CD4-positive, alpha-beta memory T cell (primary cell): ENCODE measurements at regions of chr16 and their contacts with region 1.

Region 1: DNA sequence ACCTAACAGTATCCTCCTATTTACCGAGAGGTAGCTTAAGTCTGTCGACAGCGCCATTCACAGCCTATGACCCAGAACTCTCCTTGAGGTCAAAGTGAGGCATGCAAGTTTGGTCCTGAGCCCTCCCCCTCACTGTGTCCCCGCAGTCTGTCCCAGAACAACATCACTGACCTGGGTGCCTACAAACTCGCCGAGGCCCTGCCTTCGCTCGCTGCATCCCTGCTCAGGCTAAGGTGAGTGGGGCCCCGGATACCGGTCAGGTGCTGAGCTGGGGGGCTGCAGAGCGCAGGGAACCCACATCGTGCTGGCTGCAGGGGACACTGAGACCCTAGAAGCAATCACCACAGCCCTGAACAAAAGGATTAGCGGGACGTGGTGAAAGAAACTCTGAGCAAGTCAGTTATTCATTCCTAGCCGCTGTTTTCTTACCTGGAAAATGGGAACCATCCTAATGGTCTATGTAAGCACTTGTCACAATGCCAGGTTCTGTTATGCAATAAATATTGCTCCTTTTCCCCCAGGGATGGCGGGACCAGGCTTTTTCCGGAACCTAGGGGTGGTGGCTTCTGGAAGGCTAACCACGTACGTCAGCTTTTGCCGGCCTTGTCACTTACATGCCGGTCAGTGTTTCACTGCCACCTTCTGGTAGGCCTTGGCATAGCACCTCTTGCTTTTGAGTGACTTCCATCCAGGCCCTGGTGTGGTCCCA is 23.8 kb downstream of the DEXI start:
- DNase-seq: peak; percentile 53 to 73 (median 59)
- H3K4me3 ChIP-seq: no peak overlapping the region
- H3K4me3 Mint-ChIP-seq: peak overlapping the region in 2 of 8 donors; percentile 40 to 43
- H3K27ac ChIP-seq: no peak overlapping the region
- H3K27ac Mint-ChIP-seq: peak overlapping the region in 1 of 7 donors; percentile 11
- H3K4me1 ChIP-seq: no peaks in the 10 kb centered on the region
- H3K4me1 Mint-ChIP-seq: peaks cover 0 to 6% (median 4%) of the 10 kb centered on the region in 4 donors
- H3K27me3 ChIP-seq: no peaks in the 10 kb centered on the region
- H3K27me3 Mint-ChIP-seq: peaks cover 0 to 2% of the 10 kb centered on the region in 2 donors

Region 2: DNA sequence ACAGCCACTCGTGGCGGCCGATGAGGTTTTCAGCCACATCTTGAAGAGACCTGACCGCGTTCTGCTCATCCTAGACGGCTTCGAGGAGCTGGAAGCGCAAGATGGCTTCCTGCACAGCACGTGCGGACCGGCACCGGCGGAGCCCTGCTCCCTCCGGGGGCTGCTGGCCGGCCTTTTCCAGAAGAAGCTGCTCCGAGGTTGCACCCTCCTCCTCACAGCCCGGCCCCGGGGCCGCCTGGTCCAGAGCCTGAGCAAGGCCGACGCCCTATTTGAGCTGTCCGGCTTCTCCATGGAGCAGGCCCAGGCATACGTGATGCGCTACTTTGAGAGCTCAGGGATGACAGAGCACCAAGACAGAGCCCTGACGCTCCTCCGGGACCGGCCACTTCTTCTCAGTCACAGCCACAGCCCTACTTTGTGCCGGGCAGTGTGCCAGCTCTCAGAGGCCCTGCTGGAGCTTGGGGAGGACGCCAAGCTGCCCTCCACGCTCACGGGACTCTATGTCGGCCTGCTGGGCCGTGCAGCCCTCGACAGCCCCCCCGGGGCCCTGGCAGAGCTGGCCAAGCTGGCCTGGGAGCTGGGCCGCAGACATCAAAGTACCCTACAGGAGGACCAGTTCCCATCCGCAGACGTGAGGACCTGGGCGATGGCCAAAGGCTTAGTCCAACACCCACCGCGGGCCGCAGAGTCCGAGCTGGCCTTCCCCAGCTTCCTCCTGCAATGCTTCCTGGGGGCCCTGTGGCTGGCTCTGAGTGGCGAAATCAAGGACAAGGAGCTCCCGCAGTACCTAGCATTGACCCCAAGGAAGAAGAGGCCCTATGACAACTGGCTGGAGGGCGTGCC is 11.3 kb before region 1 on chr16:
- CTCF ChIA-PET with region 1: interaction called, 18 read pairs
- POLR2A ChIA-PET with region 1: no interaction called
- intact Hi-C with region 1: no loop called
- DNase-seq: no peak
- H3K4me3 ChIP-seq: no peak overlapping the region
- H3K4me3 Mint-ChIP-seq: no peak overlapping the region
- H3K27ac ChIP-seq: no peak overlapping the region
- H3K27ac Mint-ChIP-seq: no peak overlapping the region
- H3K4me1 ChIP-seq: no peaks in the 10 kb centered on the region
- H3K4me1 Mint-ChIP-seq: no peaks in the 10 kb centered on the region
- H3K27me3 ChIP-seq: no peaks in the 10 kb centered on the region
- H3K27me3 Mint-ChIP-seq: peaks cover 0 to 2% of the 10 kb centered on the region in 2 donors